MCF 10A (cell line): ENCODE measurements at regions of chr5 and their contacts with region 1.

Region 1: GRCh38 chr5:69189162-69190086 is at the start of gene CENPH:
- DNase-seq: peak; percentile 92
- H3K4me3 Mint-ChIP-seq: peak within 1 kb of the TSS; percentile 96
- H3K27ac Mint-ChIP-seq: peak within 1 kb of the TSS; percentile 99
- H3K4me1 Mint-ChIP-seq: no peaks in the 10 kb centered on the region
- H3K27me3 Mint-ChIP-seq: no peaks in the 10 kb centered on the region
- CTCF ChIP-seq: no peak
- total RNA-seq, gene CENPH: 14.1 and 21.9 TPM in 2 replicates

Region 2: GRCh38 chr5:69166686-69167492 is 22.5 kb before region 1 on chr5 and contains the start of gene CCNB1:
- CTCF ChIA-PET with region 1: interaction called, 4 read pairs
- POLR2A ChIA-PET with region 1: interaction called, 4 read pairs
- intact Hi-C with region 1: loop called (anchors 2 kb)
- DNase-seq: peak; percentile 99
- H3K4me3 Mint-ChIP-seq: peak within 1 kb of the TSS; percentile 94
- H3K27ac Mint-ChIP-seq: peak within 1 kb of the TSS; percentile 85
- H3K4me1 Mint-ChIP-seq: peaks cover 27% of the 10 kb centered on the region
- H3K27me3 Mint-ChIP-seq: no peaks in the 10 kb centered on the region
- CTCF ChIP-seq: no peak
- total RNA-seq, gene CCNB1: 84.3 and 120 TPM in 2 replicates